ENCODE measurements at regions of chr2 and their contacts with region 1.

Region 1: GRCh38 chr2:1817256-1818051 is 73.1 kb upstream of the PXDN start:
- DNase-seq: peak; percentile 75
- H3K4me3 Mint-ChIP-seq: peak overlapping the region; percentile 8
- H3K27ac Mint-ChIP-seq: peak overlapping the region; percentile 73
- H3K4me1 Mint-ChIP-seq: peaks cover 6% of the 10 kb centered on the region
- H3K27me3 Mint-ChIP-seq: no peaks in the 10 kb centered on the region
- CTCF ChIP-seq: peak; percentile 97

Region 2: DNA sequence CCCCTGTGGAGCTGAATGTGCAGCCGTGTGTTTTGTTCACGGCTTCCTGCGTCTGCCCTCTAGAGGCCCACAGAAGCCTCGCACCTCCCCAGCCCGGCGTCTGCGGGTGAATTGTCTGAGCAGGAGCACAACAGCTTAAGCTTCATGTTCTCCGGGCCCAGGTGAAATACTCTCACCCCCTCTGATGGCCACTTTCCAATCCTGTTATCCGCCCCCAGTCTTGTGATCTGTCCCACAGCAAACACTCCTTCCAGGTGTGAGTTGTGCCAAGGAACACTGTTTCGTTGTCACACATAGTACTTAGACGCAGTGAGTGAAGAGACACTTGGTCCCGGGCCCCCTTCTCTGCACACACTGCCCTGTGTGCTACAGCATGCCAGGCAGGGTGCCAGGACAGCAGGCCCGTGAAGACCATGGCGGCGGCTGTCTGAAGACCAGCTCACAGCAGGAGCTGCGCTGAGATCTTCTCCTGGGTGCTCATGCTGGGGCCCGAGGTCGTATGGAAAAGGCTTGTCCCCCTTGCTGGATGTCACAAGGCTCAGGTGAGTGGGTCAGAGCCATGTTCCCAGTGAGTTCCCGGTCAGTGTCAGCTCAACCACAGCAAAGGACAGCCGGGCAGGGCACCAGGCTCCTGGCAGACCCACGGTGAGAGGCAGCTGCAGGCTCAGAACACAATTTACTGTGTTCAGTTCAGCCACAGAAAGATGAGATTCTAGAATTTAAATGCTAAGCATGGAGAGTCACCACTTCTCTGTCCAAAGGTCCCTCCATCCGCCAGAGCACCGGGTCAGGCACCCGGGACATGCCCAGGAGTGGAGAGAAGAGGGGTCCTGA is 66.3 kb before region 1 on chr2:
- CTCF ChIA-PET with region 1: interaction called, 10 read pairs
- POLR2A ChIA-PET with region 1: interaction called, 3 read pairs
- intact Hi-C with region 1: loop called (anchors 2 kb)
- DNase-seq: peak; percentile 74
- H3K4me3 Mint-ChIP-seq: no peak overlapping the region
- H3K27ac Mint-ChIP-seq: no peak overlapping the region
- H3K4me1 Mint-ChIP-seq: peaks cover 13% of the 10 kb centered on the region
- H3K27me3 Mint-ChIP-seq: no peaks in the 10 kb centered on the region
- CTCF ChIP-seq: peak; percentile 88

Region 3: DNA sequence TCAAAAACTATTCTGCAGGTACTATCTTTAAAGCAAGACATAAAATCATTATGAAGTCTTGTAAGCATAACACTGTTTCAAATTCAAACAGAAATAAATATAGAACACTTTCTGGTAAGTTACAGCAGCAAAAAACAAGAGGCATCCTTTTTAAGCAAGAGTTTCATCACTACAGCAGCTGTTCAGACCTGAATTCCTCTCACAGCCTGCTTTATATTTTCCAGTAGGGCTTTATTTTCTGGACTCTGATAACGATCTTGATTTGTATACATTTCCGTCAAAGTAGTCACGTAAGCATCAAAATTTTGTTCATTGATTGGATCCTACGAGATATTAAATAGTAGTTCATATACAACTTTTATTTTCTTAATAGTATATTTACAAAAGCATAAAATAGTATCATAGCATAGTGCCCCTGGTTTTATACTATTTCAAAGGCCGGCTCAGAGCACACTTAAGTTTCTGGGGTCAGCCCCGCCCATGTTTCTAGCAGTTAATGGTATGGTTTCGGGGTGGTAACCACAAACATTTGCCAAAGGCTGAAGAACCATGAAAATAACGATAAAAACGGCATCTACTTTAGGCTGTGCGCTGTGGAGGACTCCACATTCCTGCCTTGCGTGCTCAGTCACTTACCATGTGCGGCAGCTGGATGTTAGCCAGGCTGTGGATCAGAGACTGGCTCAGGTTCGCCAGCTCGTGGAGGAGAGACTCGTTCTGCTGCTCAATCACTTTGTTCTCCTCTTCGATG is 25.6 kb before region 1 on chr2:
- CTCF ChIA-PET with region 1: interaction called, 18 read pairs
- POLR2A ChIA-PET with region 1: no interaction called
- intact Hi-C with region 1: no loop called
- DNase-seq: peak; percentile 39
- H3K4me3 Mint-ChIP-seq: no peak overlapping the region
- H3K27ac Mint-ChIP-seq: no peak overlapping the region
- H3K4me1 Mint-ChIP-seq: peaks cover 8% of the 10 kb centered on the region
- H3K27me3 Mint-ChIP-seq: no peaks in the 10 kb centered on the region
- CTCF ChIP-seq: no peak

Region 4: DNA sequence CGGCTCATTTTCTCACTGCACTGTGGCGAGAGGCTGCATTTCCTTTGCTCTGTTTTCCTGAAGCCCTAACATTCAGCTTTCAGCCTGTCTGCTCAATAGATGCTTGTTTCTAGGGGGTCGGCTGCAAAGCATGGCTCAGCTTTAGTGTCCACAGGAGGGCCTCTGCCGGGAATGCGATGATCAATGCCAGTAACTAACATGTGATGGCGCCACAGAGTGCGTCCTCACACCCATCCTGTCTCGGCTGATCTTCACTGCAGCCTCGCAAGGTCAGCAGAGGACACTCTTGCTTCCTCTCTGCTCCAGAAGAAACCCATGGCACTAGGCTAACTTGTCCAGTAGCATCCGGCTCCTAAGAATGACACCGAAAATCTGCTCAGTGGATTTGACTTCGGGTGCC is 83.3 kb after region 1 on chr2:
- CTCF ChIA-PET with region 1: no interaction called
- POLR2A ChIA-PET with region 1: no interaction called
- intact Hi-C with region 1: no loop called
- DNase-seq: no peak
- H3K4me3 Mint-ChIP-seq: no peak overlapping the region
- H3K27ac Mint-ChIP-seq: no peak overlapping the region
- H3K4me1 Mint-ChIP-seq: peaks cover 19% of the 10 kb centered on the region
- H3K27me3 Mint-ChIP-seq: peaks cover 12% of the 10 kb centered on the region
- CTCF ChIP-seq: no peak

Region 5: GRCh38 chr2:2085533-2085932 is 268.1 kb after region 1 on chr2:
- CTCF ChIA-PET with region 1: no interaction called
- POLR2A ChIA-PET with region 1: no interaction called
- intact Hi-C with region 1: no loop called
- DNase-seq: no peak
- H3K4me3 Mint-ChIP-seq: no peak overlapping the region
- H3K27ac Mint-ChIP-seq: no peak overlapping the region
- H3K4me1 Mint-ChIP-seq: no peaks in the 10 kb centered on the region
- H3K27me3 Mint-ChIP-seq: peaks cover 17% of the 10 kb centered on the region
- CTCF ChIP-seq: no peak

Measured in MCF 10A (cell line).